Naive thymus-derived CD8-positive, alpha-beta T cell (primary cell): ENCODE measurements at regions of chr2 and their contacts with region 1.

Region 1: DNA sequence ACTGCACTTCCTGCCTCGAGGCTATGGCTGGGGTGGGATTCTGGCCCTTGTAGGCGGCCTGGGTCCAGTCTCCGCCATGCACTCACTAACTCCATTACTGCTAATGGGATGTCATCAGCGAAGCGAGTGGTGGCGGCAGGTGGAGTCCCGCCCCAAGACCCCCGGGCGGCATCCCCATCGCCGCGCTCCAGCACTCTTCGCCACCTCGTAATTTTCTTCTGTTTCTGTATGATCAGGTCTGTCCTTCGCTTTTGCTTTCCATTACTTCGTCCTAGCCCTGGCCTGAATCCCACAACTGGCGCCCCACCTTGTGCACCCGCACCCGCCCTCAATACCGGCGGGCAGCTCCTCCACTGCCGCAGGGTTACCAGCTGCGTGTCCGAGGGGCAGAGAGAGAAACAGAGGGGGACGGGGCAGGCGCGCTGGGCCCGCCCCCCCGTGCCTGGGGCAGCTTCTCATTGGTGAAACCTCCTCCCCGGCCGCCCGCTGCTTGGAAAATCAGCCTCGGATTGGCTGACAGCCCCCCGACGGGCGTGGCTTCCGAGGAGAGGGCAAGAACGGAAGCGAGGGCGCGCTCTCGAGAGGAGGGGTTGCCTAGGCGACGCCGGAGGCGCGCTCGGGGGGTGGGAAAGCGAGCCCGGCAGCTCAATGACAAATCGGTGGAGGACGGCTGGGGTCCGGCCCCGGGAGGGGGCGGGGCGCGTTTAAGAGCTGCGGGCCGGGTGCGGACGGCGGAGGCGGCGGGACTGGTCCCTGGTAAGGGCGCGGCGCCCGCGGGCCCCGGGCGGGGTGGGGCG is at the start of gene RALB:
- DNase-seq: peak; percentile 96 to 99 (median 98)
- ATAC-seq: peak; percentile 93 to 95
- H3K4me3 Mint-ChIP-seq: peak within 1 kb of the TSS; percentile 96 to 100 (median 98)
- H3K27ac Mint-ChIP-seq: peak within 1 kb of the TSS; percentile 94 to 99 (median 98)
- H3K4me1 Mint-ChIP-seq: peaks cover 31 to 48% (median 46%) of the 10 kb centered on the region in 4 donors
- H3K27me3 Mint-ChIP-seq: peaks cover 0 to 11% (median 2%) of the 10 kb centered on the region in 5 donors
- polyA plus RNA-seq, gene RALB: 17.6 to 25.8 (median 19.1) TPM

Region 2: DNA sequence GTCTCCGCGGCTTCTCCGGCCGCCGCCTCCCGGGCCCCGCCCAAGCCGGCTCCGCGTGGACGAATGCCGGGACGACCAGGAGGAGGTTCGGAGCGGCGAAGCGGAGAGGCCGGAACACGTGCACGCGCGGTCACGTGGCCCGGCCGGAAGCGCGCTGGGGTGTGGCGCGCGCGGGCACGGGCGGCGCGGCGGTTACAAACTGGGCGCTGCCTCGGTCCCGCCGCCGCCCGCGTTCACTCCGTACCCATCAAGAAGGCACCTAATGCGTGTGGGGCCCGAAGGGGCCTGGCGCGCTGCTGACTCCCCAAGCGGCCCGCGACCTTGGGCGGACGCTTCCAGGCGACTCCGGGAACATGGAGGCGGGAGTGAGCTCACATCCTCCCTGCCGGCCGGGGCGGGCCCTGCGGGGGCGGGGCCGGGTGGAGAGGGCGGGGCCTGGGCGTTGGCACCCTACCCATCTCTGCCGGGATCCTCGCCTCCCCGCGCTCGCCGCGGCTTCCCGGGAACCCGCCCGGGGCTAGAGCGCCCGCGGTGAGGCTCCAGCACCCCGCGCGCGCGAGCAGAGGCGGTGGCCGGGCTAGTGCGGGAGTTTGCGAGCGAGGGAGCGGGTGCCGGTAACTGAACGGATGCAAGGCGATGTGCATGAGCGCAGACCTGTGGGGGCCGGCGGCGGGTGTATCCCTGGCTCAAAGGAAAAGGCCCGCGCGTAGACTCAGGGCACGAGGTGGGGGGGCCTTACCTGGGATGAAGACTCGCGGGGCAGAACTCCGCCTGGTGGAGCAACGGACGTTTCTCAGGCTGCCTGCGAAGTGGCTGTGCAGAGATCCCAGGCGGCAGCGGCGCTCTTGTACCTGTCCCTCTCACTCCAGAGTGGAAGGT is 29.1 kb before region 1 on chr2 and contains the start of gene TMEM185B:
- POLR2A ChIA-PET with region 1: interaction called, 24 read pairs
- DNase-seq: peak; percentile 78 to 91 (median 89)
- ATAC-seq: peak; percentile 91 to 92
- H3K4me3 Mint-ChIP-seq: peak within 1 kb of the TSS; percentile 77 to 93 (median 86)
- H3K27ac Mint-ChIP-seq: peak within 1 kb of the TSS; percentile 84 to 96 (median 91)
- H3K4me1 Mint-ChIP-seq: peaks cover 10 to 68% (median 66%) of the 10 kb centered on the region in 4 donors
- H3K27me3 Mint-ChIP-seq: no peaks in the 10 kb centered on the region
- polyA plus RNA-seq, gene TMEM185B: 12.7 to 16.7 (median 13.8) TPM

Region 3: DNA sequence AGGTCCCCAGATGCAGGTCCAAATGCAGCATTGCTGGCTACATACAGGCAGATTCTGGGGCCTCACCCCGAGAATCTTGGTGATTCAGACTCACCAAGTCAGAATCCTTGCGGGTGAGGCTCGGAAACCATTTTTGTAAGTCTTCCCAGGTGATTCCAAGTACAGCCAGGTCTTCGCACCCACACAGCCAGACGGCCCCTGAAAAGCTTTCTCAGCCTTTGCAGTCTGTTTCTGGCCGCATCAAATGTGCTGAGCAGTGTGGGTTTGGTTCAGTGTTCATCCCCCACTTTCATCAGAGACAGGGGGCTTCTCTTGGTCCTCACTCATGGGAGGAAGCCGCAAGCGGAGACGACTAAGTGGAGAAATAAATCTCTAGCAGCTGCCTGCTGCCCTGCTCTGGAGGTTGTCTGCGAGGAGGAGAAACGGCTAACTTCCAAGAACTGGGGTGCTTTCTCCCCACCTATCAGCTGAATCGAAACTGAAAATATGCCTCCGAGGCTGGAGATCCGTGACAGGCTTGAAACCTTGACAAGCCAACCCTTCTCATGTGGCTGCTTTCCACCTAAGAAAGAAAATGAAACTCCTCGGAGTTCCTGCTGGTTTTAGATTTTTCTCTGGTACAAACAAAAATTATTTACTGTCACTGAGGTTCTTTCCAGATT is 20.3 kb before region 1 on chr2:
- POLR2A ChIA-PET with region 1: interaction called, 24 read pairs
- DNase-seq: peak in 9 of 10 donors; percentile 51 to 81 (median 65)
- ATAC-seq: peak; percentile 90 to 91
- H3K4me3 Mint-ChIP-seq: peak overlapping the region; percentile 89 to 97 (median 94)
- H3K27ac Mint-ChIP-seq: peak overlapping the region; percentile 94 to 98 (median 97)
- H3K4me1 Mint-ChIP-seq: peaks cover 13 to 67% (median 60%) of the 10 kb centered on the region in 4 donors
- H3K27me3 Mint-ChIP-seq: no peaks in the 10 kb centered on the region

Region 4: DNA sequence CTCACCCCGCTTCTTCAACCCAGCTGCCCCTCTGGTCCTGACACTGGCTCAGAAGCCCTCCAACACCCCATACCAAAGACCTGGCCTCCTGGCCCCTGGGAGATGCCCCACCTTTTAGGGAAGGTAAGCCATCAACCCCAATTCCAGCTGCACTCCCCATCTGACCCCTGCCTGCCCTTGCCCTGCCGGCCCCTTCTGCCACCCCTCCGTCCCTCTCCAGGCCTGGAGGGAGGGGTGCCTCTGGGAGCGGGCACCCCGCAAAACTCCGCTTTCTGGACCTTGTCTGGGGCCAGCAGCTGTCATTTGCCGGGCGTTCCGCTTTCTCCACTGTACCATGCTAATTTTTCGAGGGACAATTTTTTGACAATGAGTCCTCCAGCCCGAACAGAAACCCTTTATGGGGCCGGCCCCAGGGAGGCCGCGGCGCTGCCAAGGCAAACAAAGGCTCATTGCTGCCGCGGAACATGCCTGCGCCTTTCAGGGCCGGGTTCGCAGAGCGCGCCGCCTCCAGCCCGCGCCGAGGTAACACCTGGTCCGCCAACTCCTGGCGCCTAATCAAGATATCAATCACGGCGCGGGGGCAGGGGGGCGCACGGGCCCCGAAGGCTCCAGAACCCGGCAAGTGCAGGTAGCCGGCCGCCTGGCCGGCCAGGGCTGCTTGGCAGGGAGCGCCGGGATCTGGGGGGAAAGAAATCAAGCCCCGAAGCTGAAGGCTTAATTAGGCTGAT is 189.5 kb after region 1 on chr2:
- POLR2A ChIA-PET with region 1: no interaction called
- DNase-seq: no peak
- ATAC-seq: peak in 1 of 2 donors; percentile 28
- H3K4me3 Mint-ChIP-seq: peak overlapping the region; percentile 34 to 81 (median 67)
- H3K27ac Mint-ChIP-seq: no peak overlapping the region
- H3K4me1 Mint-ChIP-seq: peaks cover 0 to 14% (median 8%) of the 10 kb centered on the region in 4 donors
- H3K27me3 Mint-ChIP-seq: peaks cover 20 to 76% (median 49%) of the 10 kb centered on the region in 5 donors